Ovary (tissue), 10 donors: ENCODE measurements at regions of chr1 and their contacts with region 1.

Region 1: DNA sequence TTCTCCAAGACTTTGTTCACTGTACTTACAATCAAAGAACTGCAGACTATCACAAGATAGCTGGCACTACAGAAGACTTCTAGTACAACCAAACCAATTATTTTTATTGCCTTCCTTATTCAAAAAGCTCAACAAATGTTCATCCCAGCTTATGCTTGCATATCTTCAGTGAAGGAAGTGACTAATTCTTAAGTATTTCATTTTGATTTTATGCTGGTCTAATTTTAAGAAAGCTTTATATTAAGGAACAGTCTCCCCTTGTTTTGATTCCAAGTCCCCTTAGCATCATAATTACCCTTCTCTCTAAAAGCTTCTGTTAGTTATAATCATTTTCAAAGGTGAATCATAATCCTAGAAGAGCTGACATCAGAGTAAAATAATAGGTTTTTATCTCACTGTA is 132.9 kb downstream of the LRRIQ3 start:
- DNase-seq: no peak
- H3K4me3 ChIP-seq: no peak overlapping the region
- H3K27ac ChIP-seq: no peak overlapping the region
- H3K4me1 ChIP-seq: no peaks in the 10 kb centered on the region
- H3K27me3 ChIP-seq: no peaks in the 10 kb centered on the region
- CTCF ChIP-seq: no peak
- EP300 ChIP-seq: no peak
- POLR2A ChIP-seq: no peak

Region 2: GRCh38 chr1:73623946-73624345 is 441.1 kb before region 1 on chr1:
- intact Hi-C with region 1: loop called in 1 of 4 experiments (anchors 5 kb)
- DNase-seq: no peak
- H3K4me3 ChIP-seq: no peak overlapping the region
- H3K27ac ChIP-seq: no peak overlapping the region
- H3K4me1 ChIP-seq: no peaks in the 10 kb centered on the region
- H3K27me3 ChIP-seq: no peaks in the 10 kb centered on the region
- CTCF ChIP-seq: no peak
- EP300 ChIP-seq: no peak
- POLR2A ChIP-seq: no peak